PC-3 (cell line): ENCODE measurements at regions of chr7 and their contacts with region 1.

Region 1: DNA sequence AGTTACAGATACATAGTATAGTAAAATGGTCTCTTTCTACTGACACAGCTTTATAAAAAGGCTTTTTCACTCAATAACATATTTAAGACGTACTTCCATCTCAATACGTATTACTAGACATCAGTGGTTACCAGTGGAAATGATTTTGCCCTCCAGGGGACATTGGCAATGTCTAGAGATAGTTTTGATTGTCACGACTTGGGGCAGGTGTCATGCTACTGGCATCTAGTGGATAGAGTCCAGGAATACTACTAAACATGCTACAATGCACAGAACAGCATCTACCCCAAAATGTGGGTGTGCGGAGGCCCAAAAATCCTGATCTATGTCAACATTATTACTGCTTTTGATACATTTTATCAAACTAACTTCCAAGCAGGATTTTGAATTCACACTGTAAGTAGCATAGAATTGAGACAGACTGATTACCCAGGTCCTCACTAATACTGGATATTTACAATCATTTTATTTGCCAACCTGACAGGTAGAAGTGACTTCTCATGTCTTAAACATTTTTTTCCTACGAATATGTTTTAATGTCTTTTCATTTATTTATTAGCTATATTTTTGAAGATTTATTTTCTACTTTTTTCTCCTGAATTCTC is 53.8 kb downstream of the HGF start:
- DNase-seq: peak; percentile 83
- ATAC-seq: peak; percentile 99
- H3K4me3 ChIP-seq: peak overlapping the region; percentile 39
- H3K27ac ChIP-seq: peak overlapping the region; percentile 68
- H3K4me1 ChIP-seq: peaks cover 13% of the 10 kb centered on the region; the same call in 1 of the 2 replicates
- H3K27me3 ChIP-seq: no peaks in the 10 kb centered on the region
- CTCF ChIP-seq: peak; percentile 90

Region 2: DNA sequence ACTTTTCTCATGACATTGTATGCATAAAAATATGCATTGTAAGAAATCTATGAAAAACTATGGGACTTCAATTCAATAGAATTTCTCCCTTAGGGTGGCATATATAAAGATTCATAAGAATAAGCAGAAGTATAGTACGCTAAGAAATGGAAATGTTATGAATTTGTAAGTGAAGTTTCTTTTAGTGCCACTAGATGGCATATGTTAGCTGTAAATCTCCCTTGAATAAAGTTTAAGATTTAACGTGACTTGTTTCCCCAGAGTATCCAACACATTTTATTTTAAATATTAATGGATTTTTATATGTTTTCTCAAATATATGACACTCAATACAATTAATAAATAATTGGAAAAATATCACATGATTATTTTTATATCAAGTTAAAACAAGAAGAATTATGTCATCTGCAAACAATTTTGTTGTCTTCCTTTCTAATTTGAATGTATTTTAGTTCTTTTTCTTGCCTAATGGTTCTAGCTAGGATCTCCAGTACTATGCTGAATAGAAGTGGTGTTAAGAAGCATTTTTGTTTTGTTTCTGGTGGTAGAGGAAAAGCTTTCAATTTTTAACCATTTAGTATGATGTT is 233.4 kb before region 1 on chr7:
- CTCF ChIA-PET with region 1: no interaction called
- POLR2A ChIA-PET with region 1: no interaction called
- intact Hi-C with region 1: loop called (anchors 5 kb)
- DNase-seq: peak; percentile 55
- ATAC-seq: peak; percentile 49; the same call in 1 of the 2 replicates
- H3K4me3 ChIP-seq: no peak overlapping the region
- H3K27ac ChIP-seq: no peak overlapping the region
- H3K4me1 ChIP-seq: 0 out of 2 replicates have a peak, but pooled peaks cover 4% of the 10 kb centered on the region
- H3K27me3 ChIP-seq: no peaks in the 10 kb centered on the region
- CTCF ChIP-seq: peak; percentile 70

Region 3: GRCh38 chr7:81704595-81704994 is 11.5 kb before region 1 on chr7:
- CTCF ChIA-PET with region 1: no interaction called
- POLR2A ChIA-PET with region 1: no interaction called
- intact Hi-C with region 1: no loop called
- DNase-seq: no peak
- ATAC-seq: peak; percentile 24; the same call in 1 of the 2 replicates
- H3K4me3 ChIP-seq: no peak overlapping the region
- H3K27ac ChIP-seq: peak overlapping the region; percentile 48
- H3K4me1 ChIP-seq: peaks cover 14% of the 10 kb centered on the region
- H3K27me3 ChIP-seq: no peaks in the 10 kb centered on the region
- CTCF ChIP-seq: no peak

Region 4: GRCh38 chr7:81769891-81770727 is 54.0 kb after region 1 on chr7 and contains the start of gene HGF:
- CTCF ChIA-PET with region 1: interaction called, 4 read pairs
- POLR2A ChIA-PET with region 1: no interaction called
- intact Hi-C with region 1: loop called (anchors 2 kb)
- DNase-seq: peak; percentile 58
- ATAC-seq: peak; percentile 96
- H3K4me3 ChIP-seq: peak within 1 kb of the TSS; percentile 38; the same call in 1 of the 2 replicates
- H3K27ac ChIP-seq: no peak within 1 kb of the TSS
- H3K4me1 ChIP-seq: no peaks in the 10 kb centered on the region; the same call in 1 of the 2 replicates
- H3K27me3 ChIP-seq: no peaks in the 10 kb centered on the region
- CTCF ChIP-seq: no peak; the same call in 1 of the 2 replicates
- total RNA-seq, gene HGF: 0.15 TPM in 1 of 2 replicates, not detected in the other

Region 5: DNA sequence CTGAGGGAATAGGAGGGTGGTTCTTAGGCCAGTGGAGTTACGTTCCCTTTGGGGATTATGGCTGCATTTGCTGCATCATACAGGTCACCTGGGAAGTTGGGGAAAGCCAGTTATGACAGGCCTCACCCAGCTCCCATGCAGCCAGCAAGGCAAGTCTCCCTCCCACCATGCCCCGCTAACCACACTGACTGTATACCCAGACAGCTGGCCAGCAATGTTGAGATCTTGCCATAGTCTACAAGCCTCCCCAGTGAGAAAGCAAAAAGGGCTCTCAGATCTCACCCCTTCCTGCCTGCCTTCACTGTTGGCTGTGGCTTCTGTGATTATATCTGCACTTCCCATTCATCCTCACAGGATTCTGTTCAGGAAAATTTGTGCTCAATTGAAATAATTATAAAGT is 187.0 kb after region 1 on chr7:
- CTCF ChIA-PET with region 1: no interaction called
- POLR2A ChIA-PET with region 1: no interaction called
- intact Hi-C with region 1: no loop called
- DNase-seq: peak; percentile 29
- ATAC-seq: no peak
- H3K4me3 ChIP-seq: no peak overlapping the region
- H3K27ac ChIP-seq: no peak overlapping the region
- H3K4me1 ChIP-seq: peaks cover 5% of the 10 kb centered on the region
- H3K27me3 ChIP-seq: no peaks in the 10 kb centered on the region
- CTCF ChIP-seq: no peak

Region 6: GRCh38 chr7:81956520-81956919 is 240.4 kb after region 1 on chr7:
- CTCF ChIA-PET with region 1: no interaction called
- POLR2A ChIA-PET with region 1: no interaction called
- intact Hi-C with region 1: loop called (anchors 1 kb)
- DNase-seq: peak; percentile 68
- ATAC-seq: peak; percentile 74
- H3K4me3 ChIP-seq: no peak overlapping the region
- H3K27ac ChIP-seq: no peak overlapping the region
- H3K4me1 ChIP-seq: no peaks in the 10 kb centered on the region
- H3K27me3 ChIP-seq: peaks cover 3% of the 10 kb centered on the region; the same call in 1 of the 2 replicates
- CTCF ChIP-seq: peak; percentile 81